IMR-90 (cell line): ENCODE measurements at regions of chr12 and their contacts with region 1.

Region 1: GRCh38 chr12:65327207-65328076 is 49.0 kb downstream of the MSRB3 start:
- DNase-seq: peak; percentile 91
- ATAC-seq: peak; percentile 90
- H3K4me3 ChIP-seq: no peak overlapping the region
- H3K27ac ChIP-seq: peak overlapping the region; percentile 93; the same call in 1 of the 2 replicates
- H3K4me1 ChIP-seq: peaks cover 16% of the 10 kb centered on the region
- H3K27me3 ChIP-seq: no peaks in the 10 kb centered on the region
- CTCF ChIP-seq: no peak
- POLR2A ChIP-seq: no peak
- RAD21 ChIP-seq: no peak

Region 2: DNA sequence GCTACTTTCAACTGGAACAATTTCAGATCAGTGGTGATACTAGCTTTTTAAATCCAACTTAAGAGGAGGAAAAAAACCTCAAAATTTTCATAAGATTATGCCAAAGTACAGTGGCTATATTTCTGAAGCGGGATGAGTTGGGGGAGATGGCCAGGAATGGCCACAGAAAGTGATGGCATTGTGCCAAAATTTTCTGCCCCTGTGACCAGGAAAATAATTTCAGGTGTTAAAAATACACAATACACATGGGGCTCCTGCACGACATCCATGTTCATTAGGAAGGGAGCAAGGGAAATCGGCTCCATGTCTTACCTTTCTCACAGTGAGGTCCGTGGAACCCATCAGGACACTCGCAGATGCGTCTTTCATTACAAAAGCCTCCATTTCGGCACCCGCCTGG is 260.1 kb before region 1 on chr12:
- CTCF ChIA-PET with region 1: no interaction called
- POLR2A ChIA-PET with region 1: no interaction called
- dilution Hi-C with region 1: no loop called
- in situ Hi-C with region 1: no loop called
- intact Hi-C with region 1: no loop called
- DNase-seq: no peak
- ATAC-seq: no peak
- H3K4me3 ChIP-seq: no peak overlapping the region
- H3K27ac ChIP-seq: no peak overlapping the region
- H3K4me1 ChIP-seq: no peaks in the 10 kb centered on the region
- H3K27me3 ChIP-seq: peaks cover 2% of the 10 kb centered on the region; the same call in 1 of the 2 replicates
- CTCF ChIP-seq: no peak
- POLR2A ChIP-seq: no peak
- RAD21 ChIP-seq: no peak

Region 3: DNA sequence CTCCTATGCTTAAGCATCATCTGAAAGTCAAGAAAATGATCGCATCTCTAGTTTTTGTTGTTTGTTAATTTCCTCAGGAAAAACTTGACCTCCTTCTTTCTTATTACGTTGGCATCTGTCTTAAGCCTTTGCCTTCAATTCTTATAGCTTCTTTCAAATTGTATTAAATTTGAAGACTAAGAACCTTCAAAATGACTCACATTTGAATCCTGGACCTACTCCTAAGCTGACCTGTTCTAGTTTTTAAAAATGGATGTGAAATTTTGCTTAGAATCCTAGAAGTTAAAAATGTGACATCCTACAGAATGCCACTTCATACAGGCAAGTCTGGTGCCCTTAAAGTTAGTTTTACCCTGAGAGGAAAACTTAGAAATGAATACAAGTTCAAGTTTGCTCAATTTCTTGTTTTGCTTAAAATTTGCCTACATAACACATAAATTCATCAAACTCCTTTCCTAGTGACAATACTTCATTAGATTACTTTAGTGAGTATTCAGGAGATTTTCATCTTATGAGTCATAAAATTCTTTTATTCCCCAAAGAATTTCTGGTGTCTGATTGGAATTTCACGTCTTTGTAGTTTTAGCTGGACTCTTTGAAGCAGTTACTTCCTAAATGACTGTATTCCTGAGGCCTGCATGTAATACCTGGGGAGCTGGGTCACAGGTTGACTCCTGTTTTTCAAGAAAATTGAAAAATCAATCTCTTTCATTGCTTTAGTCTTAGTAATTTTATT is 103.3 kb after region 1 on chr12:
- CTCF ChIA-PET with region 1: no interaction called
- POLR2A ChIA-PET with region 1: no interaction called
- dilution Hi-C with region 1: no loop called
- in situ Hi-C with region 1: no loop called
- intact Hi-C with region 1: loop called (anchors 5 kb)
- DNase-seq: peak; percentile 63
- ATAC-seq: peak; percentile 47
- H3K4me3 ChIP-seq: no peak overlapping the region
- H3K27ac ChIP-seq: peak overlapping the region; percentile 37; the same call in 1 of the 2 replicates
- H3K4me1 ChIP-seq: peaks cover 15% of the 10 kb centered on the region
- H3K27me3 ChIP-seq: no peaks in the 10 kb centered on the region
- CTCF ChIP-seq: no peak
- POLR2A ChIP-seq: no peak
- RAD21 ChIP-seq: no peak

Region 4: DNA sequence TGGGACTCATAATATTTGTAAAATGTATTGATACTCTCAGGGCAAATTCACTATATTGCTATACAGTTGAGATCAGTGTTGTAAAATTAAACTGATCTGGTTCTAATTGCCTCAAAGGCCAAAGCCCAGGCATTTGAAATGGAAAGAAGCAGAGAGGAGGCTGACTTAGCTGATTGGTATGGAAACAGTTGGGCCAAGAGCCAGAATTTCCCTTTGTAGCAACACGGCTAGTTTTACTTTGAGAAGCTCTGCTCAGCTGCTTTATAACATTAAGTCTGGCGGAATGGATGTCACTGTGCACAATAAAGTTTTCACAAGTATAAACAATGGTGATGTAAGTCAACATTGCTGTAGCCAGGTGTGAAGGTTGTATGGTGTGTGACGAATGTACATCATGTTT is 137.5 kb after region 1 on chr12:
- CTCF ChIA-PET with region 1: no interaction called
- POLR2A ChIA-PET with region 1: no interaction called
- dilution Hi-C with region 1: no loop called
- in situ Hi-C with region 1: no loop called
- intact Hi-C with region 1: loop called (anchors 10 kb)
- DNase-seq: peak; percentile 96
- ATAC-seq: peak; percentile 92
- H3K4me3 ChIP-seq: no peak overlapping the region
- H3K27ac ChIP-seq: peak overlapping the region; percentile 73; the same call in 1 of the 2 replicates
- H3K4me1 ChIP-seq: peaks cover 14% of the 10 kb centered on the region
- H3K27me3 ChIP-seq: no peaks in the 10 kb centered on the region
- CTCF ChIP-seq: no peak
- POLR2A ChIP-seq: no peak
- RAD21 ChIP-seq: no peak

Region 5: GRCh38 chr12:65536876-65537661 is 209.6 kb after region 1 on chr12:
- CTCF ChIA-PET with region 1: interaction called, 3 read pairs
- POLR2A ChIA-PET with region 1: no interaction called
- dilution Hi-C with region 1: no loop called
- in situ Hi-C with region 1: no loop called
- intact Hi-C with region 1: loop called (anchors 5 kb)
- DNase-seq: peak; percentile 100
- ATAC-seq: peak; percentile 91
- H3K4me3 ChIP-seq: no peak overlapping the region
- H3K27ac ChIP-seq: peak overlapping the region; percentile 76
- H3K4me1 ChIP-seq: peaks cover 39% of the 10 kb centered on the region
- H3K27me3 ChIP-seq: no peaks in the 10 kb centered on the region
- CTCF ChIP-seq: no peak
- POLR2A ChIP-seq: no peak; the same call in none of the 2 replicates
- RAD21 ChIP-seq: peak; percentile 38; the same call in 1 of the 2 replicates

Region 6: GRCh38 chr12:65731771-65732170 is 404.3 kb after region 1 on chr12:
- CTCF ChIA-PET with region 1: no interaction called
- POLR2A ChIA-PET with region 1: no interaction called
- dilution Hi-C with region 1: no loop called
- in situ Hi-C with region 1: no loop called
- intact Hi-C with region 1: no loop called
- DNase-seq: no peak
- ATAC-seq: no peak
- H3K4me3 ChIP-seq: no peak overlapping the region
- H3K27ac ChIP-seq: no peak overlapping the region
- H3K4me1 ChIP-seq: no peaks in the 10 kb centered on the region
- H3K27me3 ChIP-seq: peaks cover 13% of the 10 kb centered on the region
- CTCF ChIP-seq: no peak
- POLR2A ChIP-seq: no peak
- RAD21 ChIP-seq: no peak